ENCODE measurements at regions of chr17 and their contacts with region 1.

Region 1: GRCh38 chr17:60036796-60037612 is 41.7 kb downstream of the HEATR6 start:
- DNase-seq: peak; percentile 8 to 67
- H3K4me3 ChIP-seq: no peak overlapping the region
- H3K27ac ChIP-seq: no peak overlapping the region
- H3K4me1 ChIP-seq: no peaks in the 10 kb centered on the region
- H3K27me3 ChIP-seq: no peaks in the 10 kb centered on the region
- CTCF ChIP-seq: peak; percentile 64 to 89 (median 88)

Region 2: GRCh38 chr17:59918975-59919530 is 118.0 kb before region 1 on chr17:
- intact Hi-C with region 1: loop called (anchors 5 kb)
- DNase-seq: no peak
- H3K4me3 ChIP-seq: no peak overlapping the region
- H3K27ac ChIP-seq: no peak overlapping the region
- H3K4me1 ChIP-seq: no peaks in the 10 kb centered on the region
- H3K27me3 ChIP-seq: no peaks in the 10 kb centered on the region
- CTCF ChIP-seq: no peak

Region 3: GRCh38 chr17:59964482-59965328 is 72.3 kb before region 1 on chr17 and contains the start of gene RNFT1:
- intact Hi-C with region 1: loop called (anchors 10 kb)
- DNase-seq: peak; percentile 55 to 94
- H3K4me3 ChIP-seq: peak within 1 kb of the TSS; percentile 71 to 81
- H3K27ac ChIP-seq: peak within 1 kb of the TSS; percentile 84 to 92
- H3K4me1 ChIP-seq: peaks cover 0 to 18% of the 10 kb centered on the region in 2 donors
- H3K27me3 ChIP-seq: no peaks in the 10 kb centered on the region
- CTCF ChIP-seq: no peak
- total RNA-seq, gene RNFT1: 1.9 TPM

Region 4: GRCh38 chr17:60154616-60155426 is 117.8 kb after region 1 on chr17:
- intact Hi-C with region 1: no loop called
- DNase-seq: no peak
- H3K4me3 ChIP-seq: no peak overlapping the region
- H3K27ac ChIP-seq: no peak overlapping the region
- H3K4me1 ChIP-seq: peaks cover 0 to 3% of the 10 kb centered on the region in 2 donors
- H3K27me3 ChIP-seq: peaks cover 7% of the 10 kb centered on the region
- CTCF ChIP-seq: no peak

Measured in ascending aorta (tissue), 2 donors.